ENCODE measurements at regions of chr15 and their contacts with region 1.

Region 1: DNA sequence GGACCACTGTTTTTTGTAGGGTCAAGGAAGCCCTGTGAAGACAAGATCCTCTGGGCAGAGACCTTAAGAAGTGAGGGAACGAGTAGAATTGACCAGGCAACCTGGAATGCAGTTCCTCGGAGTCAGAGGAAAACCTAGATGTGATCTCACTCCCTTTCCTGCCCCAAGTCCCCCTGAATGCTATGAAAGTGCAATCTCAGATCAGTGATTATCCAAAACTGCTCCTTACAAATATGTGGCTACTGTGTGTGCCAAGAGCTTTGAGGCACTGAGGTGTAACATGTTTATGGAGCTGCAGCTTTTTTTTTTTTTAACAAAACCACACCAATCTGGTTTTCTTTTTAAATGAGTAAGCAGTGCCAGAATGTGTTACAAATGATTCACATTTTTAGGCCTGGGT is 35.8 kb downstream of the THSD4 start:
- DNase-seq: no peak
- ATAC-seq: no peak

Region 2: DNA sequence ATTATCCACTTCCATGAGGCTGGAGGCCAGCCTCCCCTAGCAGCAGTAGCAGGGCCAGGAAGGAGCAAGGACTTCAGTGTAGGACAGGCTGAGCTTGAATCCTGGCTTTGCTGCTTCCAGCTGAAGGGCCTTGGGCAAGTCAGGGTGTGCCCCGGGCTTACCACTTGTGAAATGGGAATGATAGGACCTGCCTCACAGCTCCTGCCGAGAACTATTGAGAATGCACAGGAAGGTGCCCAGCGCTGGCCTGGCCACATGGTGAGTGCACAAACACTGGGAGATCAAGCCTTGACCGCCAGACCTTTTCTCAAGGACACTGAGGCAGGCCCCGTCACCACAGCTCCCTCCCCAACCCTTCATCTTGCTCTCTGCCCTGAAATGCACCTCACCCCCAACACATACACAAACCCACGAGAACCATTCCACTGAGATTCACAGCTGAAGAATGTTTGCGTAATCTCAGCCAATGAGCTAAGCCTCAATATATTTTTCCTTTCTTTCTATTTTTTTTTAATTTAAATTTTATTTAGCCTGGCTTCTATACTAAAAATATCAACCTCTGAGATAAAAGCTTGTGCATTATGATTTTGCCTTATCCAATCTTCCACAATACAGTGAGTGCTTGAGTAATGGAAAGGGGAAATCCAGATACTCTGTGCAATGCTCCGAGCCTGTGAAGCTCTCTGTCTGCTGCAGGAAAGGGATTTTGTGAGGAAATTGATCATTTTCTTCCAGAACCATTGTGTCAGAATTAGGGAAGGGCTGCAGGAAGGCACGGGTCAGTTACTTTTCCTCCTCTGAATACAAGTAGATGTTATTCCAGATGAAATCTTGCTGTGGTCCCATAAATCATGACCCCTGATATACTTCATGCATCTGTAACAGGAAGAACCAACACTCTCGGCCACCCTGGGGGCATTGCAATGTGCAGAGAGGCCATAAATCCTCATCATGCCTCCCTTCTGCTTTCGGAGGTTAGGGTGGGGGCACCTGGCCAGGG is 1247.3 kb before region 1 on chr15:
- intact Hi-C with region 1: no loop called
- DNase-seq: no peak
- ATAC-seq: no peak

Region 3: GRCh38 chr15:71195240-71195639 is 44.2 kb after region 1 on chr15:
- intact Hi-C with region 1: loop called (anchors 5 kb)
- DNase-seq: no peak
- ATAC-seq: no peak

Region 4: DNA sequence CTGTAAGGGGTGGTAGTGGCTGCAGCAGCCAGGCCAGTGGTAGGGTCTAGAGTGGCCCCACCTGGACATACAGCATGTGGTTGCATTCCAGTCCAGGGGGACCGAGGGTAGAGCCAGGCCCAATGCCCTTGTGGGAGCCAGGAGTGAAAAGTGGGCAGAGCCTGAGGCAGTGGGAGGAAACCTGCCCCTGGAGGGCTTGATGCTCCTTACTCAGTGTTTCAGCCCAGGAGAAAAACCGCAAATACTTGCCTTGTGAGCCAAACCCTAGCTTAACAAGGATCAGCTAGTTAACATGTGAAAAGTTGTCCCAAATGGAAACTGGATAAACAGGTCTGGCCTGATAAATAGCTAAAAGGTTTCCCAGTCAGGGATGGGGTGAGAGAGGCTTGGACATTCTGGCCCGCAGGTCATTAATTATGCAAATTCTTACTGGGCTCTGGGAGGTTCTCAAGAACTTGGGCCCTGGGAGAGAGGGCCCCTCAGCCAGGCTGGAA is 186.2 kb after region 1 on chr15:
- intact Hi-C with region 1: loop called (anchors 5 kb)
- DNase-seq: no peak
- ATAC-seq: no peak

Measured in Right ventricle myocardium inferior (tissue), 1 donor.